ENCODE measurements at regions of chr7 and their contacts with region 1.

Region 1: GRCh38 chr7:140479062-140479738 is at the start of gene MKRN1:
- DNase-seq: peak; percentile 87 to 93 (median 92)
- ATAC-seq: peak; percentile 93
- H3K4me3 ChIP-seq: peak within 1 kb of the TSS; percentile 84
- H3K4me3 Mint-ChIP-seq: peak within 1 kb of the TSS; percentile 90 to 100 (median 98)
- H3K27ac ChIP-seq: peak within 1 kb of the TSS; percentile 89
- H3K27ac Mint-ChIP-seq: peak within 1 kb of the TSS; percentile 92 to 99 (median 99)
- H3K4me1 ChIP-seq: peaks cover 21 to 28% of the 10 kb centered on the region in 2 donors
- H3K4me1 Mint-ChIP-seq: peaks cover 13 to 35% (median 25%) of the 10 kb centered on the region in 7 donors
- H3K27me3 ChIP-seq: no peaks in the 10 kb centered on the region
- H3K27me3 Mint-ChIP-seq: peaks cover 0 to 15% (median 0%) of the 10 kb centered on the region in 5 donors
- total RNA-seq, gene MKRN1: 85.1 to 162 (median 144) TPM

Region 2: GRCh38 chr7:139180700-139181311 is 1298.4 kb before region 1 on chr7:
- CTCF ChIA-PET with region 1: no interaction called
- POLR2A ChIA-PET with region 1: no interaction called
- intact Hi-C with region 1: no loop called
- DNase-seq: no peak
- ATAC-seq: no peak
- H3K4me3 ChIP-seq: no peak overlapping the region
- H3K4me3 Mint-ChIP-seq: no peak overlapping the region
- H3K27ac ChIP-seq: no peak overlapping the region
- H3K27ac Mint-ChIP-seq: no peak overlapping the region
- H3K4me1 ChIP-seq: no peaks in the 10 kb centered on the region
- H3K4me1 Mint-ChIP-seq: peaks cover 0 to 4% (median 3%) of the 10 kb centered on the region in 7 donors
- H3K27me3 ChIP-seq: no peaks in the 10 kb centered on the region
- H3K27me3 Mint-ChIP-seq: no peaks in the 10 kb centered on the region

Region 3: GRCh38 chr7:139359366-139360209 is 1119.6 kb before region 1 on chr7 and contains the start of gene LUC7L2:
- CTCF ChIA-PET with region 1: no interaction called
- POLR2A ChIA-PET with region 1: no interaction called
- intact Hi-C with region 1: loop called in 1 of 2 experiments (anchors 5 kb)
- DNase-seq: peak; percentile 96 to 100 (median 99)
- ATAC-seq: peak; percentile 91
- H3K4me3 ChIP-seq: peak within 1 kb of the TSS; percentile 80
- H3K4me3 Mint-ChIP-seq: peak within 1 kb of the TSS; percentile 93 to 100 (median 99)
- H3K27ac ChIP-seq: peak within 1 kb of the TSS; percentile 97
- H3K27ac Mint-ChIP-seq: peak within 1 kb of the TSS; percentile 95 to 100 (median 98)
- H3K4me1 ChIP-seq: peaks cover 10 to 27% of the 10 kb centered on the region in 2 donors
- H3K4me1 Mint-ChIP-seq: peaks cover 21 to 60% (median 45%) of the 10 kb centered on the region in 7 donors
- H3K27me3 ChIP-seq: no peaks in the 10 kb centered on the region
- H3K27me3 Mint-ChIP-seq: no peaks in the 10 kb centered on the region
- total RNA-seq, gene LUC7L2: 116 to 183 (median 150) TPM

Region 4: GRCh38 chr7:140358412-140359051 is 120.7 kb before region 1 on chr7:
- CTCF ChIA-PET with region 1: no interaction called
- POLR2A ChIA-PET with region 1: interaction called, 3 read pairs
- intact Hi-C with region 1: loop called in 1 of 2 experiments (anchors 2 kb)
- DNase-seq: peak in 1 of 9 donors; percentile 29
- ATAC-seq: peak; percentile 83
- H3K4me3 ChIP-seq: peak overlapping the region; percentile 29
- H3K4me3 Mint-ChIP-seq: peak overlapping the region in 9 of 10 donors; percentile 72 to 92 (median 80)
- H3K27ac ChIP-seq: no peak overlapping the region
- H3K27ac Mint-ChIP-seq: peak overlapping the region in 8 of 9 donors; percentile 5 to 99 (median 86)
- H3K4me1 ChIP-seq: peaks cover 0 to 7% of the 10 kb centered on the region in 2 donors
- H3K4me1 Mint-ChIP-seq: peaks cover 14 to 34% (median 25%) of the 10 kb centered on the region in 7 donors
- H3K27me3 ChIP-seq: no peaks in the 10 kb centered on the region
- H3K27me3 Mint-ChIP-seq: no peaks in the 10 kb centered on the region

Region 5: GRCh38 chr7:140494867-140495266 is 15.7 kb after region 1 on chr7:
- CTCF ChIA-PET with region 1: interaction called, 77 read pairs
- POLR2A ChIA-PET with region 1: interaction called, 10 read pairs
- intact Hi-C with region 1: loop called (anchors 1 kb)
- DNase-seq: no peak
- ATAC-seq: no peak
- H3K4me3 ChIP-seq: no peak overlapping the region
- H3K4me3 Mint-ChIP-seq: no peak overlapping the region
- H3K27ac ChIP-seq: no peak overlapping the region
- H3K27ac Mint-ChIP-seq: no peak overlapping the region
- H3K4me1 ChIP-seq: no peaks in the 10 kb centered on the region
- H3K4me1 Mint-ChIP-seq: peaks cover 0 to 5% (median 0%) of the 10 kb centered on the region in 7 donors
- H3K27me3 ChIP-seq: no peaks in the 10 kb centered on the region
- H3K27me3 Mint-ChIP-seq: peaks cover 0 to 3% (median 0%) of the 10 kb centered on the region in 5 donors

Region 6: DNA sequence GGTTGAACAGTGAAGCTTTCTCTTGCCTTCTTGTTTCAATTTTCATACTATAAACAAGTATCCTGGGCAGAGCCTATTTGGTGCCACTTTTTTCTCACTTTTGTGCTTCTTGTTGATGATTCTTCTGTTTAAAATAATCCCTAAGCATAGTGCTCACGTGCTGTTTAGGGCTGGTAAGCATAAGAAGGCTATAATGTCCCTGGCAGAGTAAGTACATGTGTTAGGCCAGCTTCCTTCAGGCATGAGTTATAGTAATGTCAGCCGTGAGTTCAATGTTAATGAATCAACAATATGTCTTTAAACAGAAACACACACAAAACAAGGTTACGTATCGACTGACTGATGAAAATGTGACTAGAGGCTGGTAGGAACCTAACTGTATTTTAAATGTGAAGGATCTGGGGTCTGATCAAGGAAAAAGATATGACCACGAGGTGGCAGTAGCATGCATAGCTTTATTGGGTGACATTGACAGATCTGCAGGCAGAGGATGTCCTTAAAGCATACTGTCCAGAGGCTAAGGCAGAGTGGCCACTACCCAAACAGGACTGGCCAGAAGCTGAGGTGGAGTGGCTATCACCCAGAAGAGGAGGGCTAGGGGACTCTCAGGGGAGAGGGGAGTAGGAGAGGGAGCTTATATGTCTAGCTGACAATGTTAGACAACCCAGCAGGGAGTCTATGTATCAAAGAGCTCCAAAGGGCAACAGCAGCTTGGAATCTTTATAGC is 331.8 kb after region 1 on chr7:
- CTCF ChIA-PET with region 1: no interaction called
- POLR2A ChIA-PET with region 1: no interaction called
- intact Hi-C with region 1: loop called in 1 of 2 experiments (anchors 5 kb)
- DNase-seq: peak; percentile 19 to 76 (median 65)
- ATAC-seq: peak; percentile 91
- H3K4me3 ChIP-seq: no peak overlapping the region
- H3K4me3 Mint-ChIP-seq: no peak overlapping the region
- H3K27ac ChIP-seq: no peak overlapping the region
- H3K27ac Mint-ChIP-seq: peak overlapping the region in 6 of 9 donors; percentile 6 to 82 (median 60)
- H3K4me1 ChIP-seq: no peaks in the 10 kb centered on the region
- H3K4me1 Mint-ChIP-seq: peaks cover 0 to 22% (median 4%) of the 10 kb centered on the region in 7 donors
- H3K27me3 ChIP-seq: no peaks in the 10 kb centered on the region
- H3K27me3 Mint-ChIP-seq: no peaks in the 10 kb centered on the region

Region 7: DNA sequence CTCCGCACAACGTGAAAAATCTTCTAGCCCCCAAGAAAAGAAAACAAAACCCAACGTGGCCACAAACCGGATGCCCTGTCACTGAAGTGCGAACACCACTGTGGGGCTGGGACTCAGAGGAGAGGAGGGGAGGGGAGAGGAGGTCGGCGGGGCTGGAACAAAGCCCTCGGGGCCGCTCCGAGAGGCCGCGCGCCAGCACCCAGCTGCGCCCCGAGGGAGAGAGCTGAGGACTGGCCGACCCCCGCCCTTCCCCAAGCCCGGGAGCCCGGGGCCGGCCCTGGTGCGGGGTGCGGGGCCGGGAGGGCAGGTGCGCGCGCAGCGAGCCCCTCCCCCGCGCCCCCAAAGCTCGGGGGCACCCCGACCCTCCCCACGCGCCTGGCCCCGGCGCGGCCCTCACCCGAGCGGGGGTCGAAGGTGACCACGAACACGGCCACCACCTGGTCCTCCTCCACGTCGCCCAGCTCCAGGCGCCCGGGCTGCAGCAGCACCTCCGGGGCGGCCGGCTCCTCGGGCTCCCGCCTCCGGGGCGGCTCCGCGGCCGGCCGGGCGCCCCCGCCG is 1222.4 kb after region 1 on chr7:
- CTCF ChIA-PET with region 1: no interaction called
- POLR2A ChIA-PET with region 1: no interaction called
- intact Hi-C with region 1: loop called in 1 of 2 experiments (anchors 1 kb)
- DNase-seq: peak; percentile 50 to 81 (median 76)
- ATAC-seq: peak; percentile 90
- H3K4me3 ChIP-seq: peak overlapping the region; percentile 51
- H3K4me3 Mint-ChIP-seq: peak overlapping the region; percentile 80 to 95 (median 88)
- H3K27ac ChIP-seq: peak overlapping the region; percentile 90
- H3K27ac Mint-ChIP-seq: peak overlapping the region; percentile 77 to 96 (median 88)
- H3K4me1 ChIP-seq: peaks cover 7 to 19% of the 10 kb centered on the region in 2 donors
- H3K4me1 Mint-ChIP-seq: peaks cover 39 to 56% (median 49%) of the 10 kb centered on the region in 7 donors
- H3K27me3 ChIP-seq: no peaks in the 10 kb centered on the region
- H3K27me3 Mint-ChIP-seq: peaks cover 0 to 16% (median 0%) of the 10 kb centered on the region in 5 donors